ENCODE measurements at regions of chr6 and their contacts with region 1.

Region 1: DNA sequence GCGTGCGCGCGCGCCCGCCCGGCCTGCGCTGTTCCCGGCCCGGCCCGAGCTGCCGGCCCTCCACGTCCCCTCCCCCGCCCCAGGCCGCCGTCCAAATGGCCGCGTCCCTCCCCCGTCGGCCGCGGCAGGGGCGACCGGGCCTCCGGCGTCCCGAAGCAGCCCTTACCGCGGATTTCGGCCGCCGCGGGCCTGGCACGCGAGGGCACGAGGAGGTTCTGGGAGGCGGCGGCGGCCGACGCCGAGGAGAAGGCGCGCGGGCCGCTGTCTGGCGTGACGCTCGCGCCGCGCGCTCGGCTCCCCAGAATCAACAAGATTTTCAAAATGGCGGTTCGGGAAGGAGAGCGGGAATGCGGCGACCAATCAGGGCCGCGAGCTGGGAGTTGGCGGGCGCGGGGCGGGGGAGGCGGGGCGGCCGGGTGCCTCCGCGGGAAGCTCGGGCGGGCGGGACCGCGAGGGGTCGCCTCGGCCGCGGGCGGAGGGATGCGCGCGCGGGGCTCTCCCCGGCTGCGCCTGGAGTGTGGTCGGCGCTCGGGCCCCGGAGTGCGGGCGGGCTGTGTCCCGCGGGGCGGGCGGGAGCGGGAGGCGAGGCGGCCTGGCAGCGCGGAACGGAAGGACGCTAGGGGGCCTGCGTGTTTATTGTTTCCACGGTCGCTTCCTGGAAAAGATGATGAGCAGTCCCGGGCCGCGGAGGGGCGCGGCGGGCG is at the start of gene DEK:
- DNase-seq: peak; percentile 80
- ATAC-seq: peak; percentile 51
- H3K4me3 ChIP-seq: peak within 1 kb of the TSS; percentile 76
- H3K27ac ChIP-seq: peak within 1 kb of the TSS; percentile 75
- H3K4me1 ChIP-seq: peaks cover 43% of the 10 kb centered on the region
- H3K27me3 ChIP-seq: no peaks in the 10 kb centered on the region
- CTCF ChIP-seq: peak; percentile 54; the same call in 1 of the 2 replicates
- total RNA-seq, gene DEK: 155 and 170 TPM in 2 replicates

Region 2: DNA sequence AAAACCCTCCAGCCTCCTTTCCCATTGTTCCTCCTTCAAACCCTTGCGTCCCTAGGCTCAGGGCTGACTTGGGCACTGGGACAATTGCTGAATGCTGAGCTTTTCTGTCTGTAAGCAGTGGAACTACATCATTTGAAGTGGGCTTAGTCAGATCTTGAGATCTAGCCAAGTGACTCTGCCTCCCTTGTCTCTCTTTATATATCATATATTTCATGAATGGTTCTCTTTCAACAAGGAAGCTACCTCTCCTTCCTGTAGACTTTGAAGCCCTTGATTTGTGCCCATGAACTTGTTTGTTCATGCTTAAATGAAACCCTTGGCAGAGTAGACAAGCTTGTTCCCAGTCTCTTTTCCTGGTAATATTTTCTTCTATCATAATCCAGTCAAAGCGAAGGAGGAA is 217.0 kb before region 1 on chr6:
- CTCF ChIA-PET with region 1: no interaction called
- POLR2A ChIA-PET with region 1: interaction called, 10 read pairs
- intact Hi-C with region 1: no loop called
- DNase-seq: peak; percentile 58
- ATAC-seq: peak; percentile 49
- H3K4me3 ChIP-seq: no peak overlapping the region
- H3K27ac ChIP-seq: 0 out of 2 replicates have a peak overlapping the region, but pooled peaks have one; percentile 0
- H3K4me1 ChIP-seq: peaks cover 15% of the 10 kb centered on the region
- H3K27me3 ChIP-seq: no peaks in the 10 kb centered on the region
- CTCF ChIP-seq: no peak

Region 3: DNA sequence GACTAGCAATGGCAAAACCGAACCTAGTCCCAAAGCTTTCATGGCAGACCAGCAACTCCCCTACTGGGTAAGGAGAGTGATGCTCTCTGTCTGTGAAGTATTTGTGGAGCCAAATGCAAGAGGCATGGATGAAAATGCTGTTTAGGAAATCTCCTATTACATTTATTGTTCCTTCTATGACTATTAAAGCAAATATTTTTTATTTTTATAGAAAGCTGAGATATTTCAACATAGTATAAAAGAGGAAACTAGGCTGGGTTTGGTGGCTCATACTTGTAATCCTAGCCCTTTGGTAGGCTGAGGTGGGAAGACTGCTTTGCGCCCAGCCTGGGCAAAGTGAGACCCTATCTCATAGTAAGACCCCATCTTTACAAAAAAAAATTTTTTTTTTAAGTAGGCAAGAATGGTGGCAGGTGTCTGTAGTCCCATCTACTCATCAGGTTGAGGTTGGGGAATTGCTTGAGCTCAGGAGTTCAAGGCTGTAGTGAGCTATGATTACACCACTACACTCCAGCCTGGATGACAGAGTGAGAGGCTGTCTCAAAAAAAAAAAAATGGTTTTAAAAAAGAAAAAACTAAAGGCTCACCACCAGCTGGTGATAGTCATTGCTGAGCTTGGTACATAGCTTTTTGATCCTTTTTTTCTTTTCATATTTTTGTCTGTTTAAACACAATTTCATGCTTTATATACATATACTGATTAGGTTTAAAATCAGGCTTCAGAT is 97.9 kb before region 1 on chr6:
- CTCF ChIA-PET with region 1: no interaction called
- POLR2A ChIA-PET with region 1: no interaction called
- intact Hi-C with region 1: no loop called
- DNase-seq: peak; percentile 45
- ATAC-seq: peak; percentile 96
- H3K4me3 ChIP-seq: no peak overlapping the region
- H3K27ac ChIP-seq: peak overlapping the region; percentile 38
- H3K4me1 ChIP-seq: peaks cover 11% of the 10 kb centered on the region
- H3K27me3 ChIP-seq: no peaks in the 10 kb centered on the region
- CTCF ChIP-seq: no peak

Region 4: DNA sequence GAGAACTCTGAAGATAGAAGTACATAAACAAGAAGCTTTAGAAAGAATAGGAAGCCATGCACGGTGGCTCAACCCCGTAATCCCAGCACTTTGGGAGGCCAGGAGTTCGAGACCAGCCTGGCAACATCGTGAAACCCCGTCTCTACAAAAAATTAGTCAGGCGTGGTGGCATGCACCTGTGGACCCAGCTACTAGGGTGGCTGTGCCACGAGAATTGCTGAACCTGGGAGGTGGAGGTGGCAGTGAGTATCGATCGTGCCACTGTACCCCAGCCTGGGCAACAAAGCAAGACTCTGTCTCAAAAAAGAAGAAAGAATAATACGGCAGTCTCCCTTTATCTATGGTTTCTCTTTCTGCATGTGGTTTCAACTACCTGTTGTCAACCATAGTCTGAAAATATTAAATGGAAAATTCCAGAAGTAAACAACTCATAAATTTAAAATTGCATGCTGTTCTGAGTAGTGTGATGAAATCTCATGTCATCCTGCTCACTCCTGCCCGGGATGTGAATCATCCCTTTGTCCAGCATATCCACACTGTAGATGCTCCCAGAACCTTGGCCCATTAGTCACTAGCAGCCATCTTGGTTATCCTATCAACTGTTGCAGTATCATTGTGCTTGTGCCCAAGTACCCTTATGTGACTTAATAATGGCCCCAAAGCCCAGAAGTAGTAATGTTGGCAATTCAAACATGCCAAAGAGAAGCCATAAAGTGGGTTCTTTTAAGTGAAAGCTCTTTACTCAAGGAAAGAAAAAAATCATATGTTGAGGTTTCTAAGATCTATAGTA is 22.1 kb before region 1 on chr6:
- CTCF ChIA-PET with region 1: interaction called, 7 read pairs
- POLR2A ChIA-PET with region 1: no interaction called
- intact Hi-C with region 1: loop called (anchors 2 kb)
- DNase-seq: peak; percentile 88
- ATAC-seq: peak; percentile 84
- H3K4me3 ChIP-seq: no peak overlapping the region
- H3K27ac ChIP-seq: peak overlapping the region; percentile 74
- H3K4me1 ChIP-seq: peaks cover 39% of the 10 kb centered on the region
- H3K27me3 ChIP-seq: no peaks in the 10 kb centered on the region
- CTCF ChIP-seq: no peak

Region 5: DNA sequence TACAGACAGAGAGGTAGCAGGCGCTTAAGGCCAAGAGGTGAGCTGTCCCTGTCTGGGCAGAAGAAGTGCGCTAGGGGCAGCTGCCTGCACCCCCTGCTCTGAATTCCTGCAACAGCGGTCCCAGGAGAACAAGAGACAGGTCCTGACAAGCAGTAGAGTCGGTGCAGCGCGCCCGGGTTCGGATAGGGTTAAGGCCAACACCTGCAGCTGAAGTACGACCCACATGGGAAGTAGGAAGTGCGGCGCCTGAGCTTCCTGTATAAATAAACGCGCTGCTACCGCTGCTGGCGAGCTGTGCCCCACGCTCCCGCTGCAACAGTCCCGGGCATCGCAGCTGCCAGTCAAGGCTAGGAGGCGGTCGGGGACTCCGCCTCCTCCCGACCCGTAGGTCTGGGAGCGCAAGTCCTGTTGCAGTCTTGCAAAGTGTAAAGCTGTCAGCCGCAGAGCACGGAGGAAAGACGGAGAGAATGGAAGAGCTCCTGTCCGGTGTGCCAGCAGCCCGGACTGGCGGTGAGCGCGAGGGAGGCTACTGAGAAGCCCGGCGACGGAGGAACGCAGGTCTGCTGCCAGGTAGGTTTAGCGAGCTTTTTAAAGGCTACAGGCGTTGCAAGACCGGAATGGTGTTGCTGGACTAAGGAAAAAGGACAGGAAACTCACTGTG is 122.8 kb after region 1 on chr6 and contains the start of gene RNF144B:
- CTCF ChIA-PET with region 1: no interaction called
- POLR2A ChIA-PET with region 1: interaction called, 5 read pairs
- intact Hi-C with region 1: loop called (anchors 5 kb)
- DNase-seq: peak; percentile 94
- ATAC-seq: peak; percentile 94
- H3K4me3 ChIP-seq: peak within 1 kb of the TSS; percentile 78
- H3K27ac ChIP-seq: peak within 1 kb of the TSS; percentile 74
- H3K4me1 ChIP-seq: peaks cover 37% of the 10 kb centered on the region
- H3K27me3 ChIP-seq: no peaks in the 10 kb centered on the region
- CTCF ChIP-seq: no peak
- total RNA-seq, gene RNF144B: 4.6 and 7.8 TPM in 2 replicates

Region 6: DNA sequence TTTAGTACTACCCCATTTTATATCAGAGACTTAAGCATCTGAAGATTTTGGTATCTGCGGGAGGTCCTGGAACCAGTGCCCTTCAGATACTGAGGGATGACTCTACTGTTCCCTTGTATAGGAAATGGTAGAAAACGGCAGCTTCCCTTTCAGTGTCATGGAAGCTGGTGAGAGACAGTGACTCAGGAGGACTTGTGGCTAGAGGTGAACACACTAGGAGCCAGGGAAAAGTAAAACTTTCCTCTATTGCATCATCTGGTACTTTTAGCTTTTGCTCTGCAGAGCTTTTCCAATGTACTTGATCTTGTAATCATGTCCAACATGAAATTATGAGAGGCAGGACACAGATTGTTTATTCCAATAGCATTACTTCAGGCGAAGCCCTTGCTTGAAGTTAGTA is 167.8 kb after region 1 on chr6:
- CTCF ChIA-PET with region 1: no interaction called
- POLR2A ChIA-PET with region 1: interaction called, 10 read pairs
- intact Hi-C with region 1: no loop called
- DNase-seq: peak; percentile 12
- ATAC-seq: no peak
- H3K4me3 ChIP-seq: no peak overlapping the region
- H3K27ac ChIP-seq: no peak overlapping the region
- H3K4me1 ChIP-seq: peaks cover 16% of the 10 kb centered on the region
- H3K27me3 ChIP-seq: no peaks in the 10 kb centered on the region
- CTCF ChIP-seq: no peak